Thyroid gland (tissue), 4 donors: ENCODE measurements at regions of chr12 and their contacts with region 1.

Region 1: DNA sequence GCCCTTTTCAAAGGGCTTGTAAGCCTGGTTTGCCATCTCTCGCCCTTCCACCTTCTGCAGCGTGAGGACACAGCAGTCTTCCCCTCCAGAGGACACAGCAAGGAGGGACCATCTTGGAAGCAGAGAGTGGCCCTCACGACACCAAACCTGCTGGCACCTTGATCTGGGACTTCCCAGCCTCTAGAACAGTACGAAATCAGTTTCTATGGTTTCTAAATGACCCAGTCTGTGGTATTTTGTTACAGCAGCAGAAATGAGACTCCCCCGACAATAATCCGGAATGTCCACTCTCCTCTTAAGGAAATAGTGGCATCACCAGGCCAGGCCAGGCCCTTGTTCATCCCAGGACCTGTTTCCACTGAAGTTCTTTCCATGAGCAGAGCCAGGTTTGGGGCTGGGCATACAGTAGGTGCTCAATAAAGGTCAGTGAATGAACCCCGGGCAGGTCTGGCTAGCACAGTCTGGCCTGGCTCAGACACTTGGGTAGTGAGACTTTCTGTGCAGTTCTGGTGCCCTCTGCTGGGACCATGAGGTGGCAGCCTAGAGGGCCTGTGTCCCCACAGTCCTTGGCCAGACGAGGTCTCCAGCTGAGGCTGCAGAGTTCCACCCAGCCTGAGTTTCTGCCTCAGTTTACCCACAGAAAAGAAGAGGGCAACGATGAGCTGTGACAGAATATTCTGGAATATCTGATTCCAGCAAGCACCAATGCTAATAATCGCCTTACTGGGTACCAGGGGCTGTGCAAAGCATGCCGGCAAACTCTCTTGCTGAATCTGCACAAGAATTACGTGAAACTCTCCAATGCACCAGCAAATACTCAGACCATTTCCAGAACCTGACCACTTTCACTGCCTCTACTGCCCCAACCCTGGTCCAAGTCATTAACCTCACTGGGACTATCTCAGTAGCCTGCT is 14.0 kb downstream of the ABCB9 start:
- DNase-seq: peak; percentile 77 to 80
- H3K4me3 ChIP-seq: no peak overlapping the region
- H3K27ac ChIP-seq: no peak overlapping the region
- H3K4me1 ChIP-seq: peaks cover 0 to 4% of the 10 kb centered on the region in 2 donors
- H3K27me3 ChIP-seq: no peaks in the 10 kb centered on the region
- CTCF ChIP-seq: peak; percentile 49 to 95 (median 91)
- POLR2A ChIP-seq: no peak

Region 2: DNA sequence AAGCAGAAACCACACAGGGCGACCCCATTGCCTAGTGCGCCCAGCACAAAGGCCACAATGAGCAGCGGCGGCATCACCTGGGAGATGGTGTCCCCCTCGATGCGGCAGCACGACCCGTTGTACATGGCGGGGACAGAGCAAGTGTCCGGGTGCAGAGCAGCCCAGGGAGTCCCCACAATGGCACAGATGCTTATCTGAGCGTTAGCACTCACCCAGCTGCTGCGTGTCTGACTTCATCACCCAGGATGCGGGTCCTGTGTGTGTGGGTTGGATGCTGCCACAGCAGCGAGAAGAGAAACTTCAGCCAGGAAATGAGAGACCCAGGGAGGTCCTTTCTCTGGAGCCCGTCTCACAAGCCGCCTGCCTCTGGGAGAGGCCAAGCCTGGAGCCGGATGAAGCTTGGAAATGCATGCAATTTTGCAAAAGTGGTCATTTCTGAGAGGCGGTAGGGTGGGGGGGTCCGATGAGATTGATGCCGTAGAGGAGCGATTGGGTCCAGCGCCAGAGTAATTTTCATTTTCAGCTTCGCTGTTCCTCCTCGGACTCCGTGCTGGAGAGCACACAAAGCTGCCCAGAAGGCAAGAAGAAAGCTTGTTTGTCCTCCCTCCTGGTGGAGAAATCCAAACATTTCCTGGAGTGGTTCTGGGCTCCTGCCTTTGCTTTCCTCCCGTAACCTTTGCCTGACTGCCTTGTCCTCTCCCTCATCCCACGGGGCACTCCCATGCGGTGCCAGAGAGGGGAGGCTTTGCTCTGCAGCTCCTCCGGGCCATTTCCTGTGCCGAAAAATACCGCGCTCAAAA is 221.8 kb before region 1 on chr12 and contains the start of gene HCAR1:
- intact Hi-C with region 1: no loop called
- DNase-seq: peak; percentile 61 to 68
- H3K4me3 ChIP-seq: peak within 1 kb of the TSS in 1 of 3 donors; percentile 12
- H3K27ac ChIP-seq: peak within 1 kb of the TSS; percentile 46 to 81 (median 64)
- H3K4me1 ChIP-seq: peaks cover 6 to 58% of the 10 kb centered on the region in 2 donors
- H3K27me3 ChIP-seq: no peaks in the 10 kb centered on the region
- CTCF ChIP-seq: peak in 4 of 6 experiments; percentile 23 to 47 (median 33)
- POLR2A ChIP-seq: peak in 1 of 2 donors; percentile 20
- total RNA-seq, gene HCAR1: 0.92 to 4.0 (median 2.0) TPM

Region 3: GRCh38 chr12:122788387-122788786 is 163.8 kb before region 1 on chr12:
- intact Hi-C with region 1: no loop called
- DNase-seq: no peak
- H3K4me3 ChIP-seq: no peak overlapping the region
- H3K27ac ChIP-seq: no peak overlapping the region
- H3K4me1 ChIP-seq: no peaks in the 10 kb centered on the region
- H3K27me3 ChIP-seq: no peaks in the 10 kb centered on the region
- CTCF ChIP-seq: no peak
- POLR2A ChIP-seq: no peak

Region 4: GRCh38 chr12:122799641-122800243 is 152.5 kb before region 1 on chr12:
- intact Hi-C with region 1: loop called (anchors 5 kb)
- DNase-seq: no peak
- H3K4me3 ChIP-seq: no peak overlapping the region
- H3K27ac ChIP-seq: no peak overlapping the region
- H3K4me1 ChIP-seq: peaks cover 0 to 6% of the 10 kb centered on the region in 2 donors
- H3K27me3 ChIP-seq: no peaks in the 10 kb centered on the region
- CTCF ChIP-seq: no peak
- POLR2A ChIP-seq: no peak

Region 5: DNA sequence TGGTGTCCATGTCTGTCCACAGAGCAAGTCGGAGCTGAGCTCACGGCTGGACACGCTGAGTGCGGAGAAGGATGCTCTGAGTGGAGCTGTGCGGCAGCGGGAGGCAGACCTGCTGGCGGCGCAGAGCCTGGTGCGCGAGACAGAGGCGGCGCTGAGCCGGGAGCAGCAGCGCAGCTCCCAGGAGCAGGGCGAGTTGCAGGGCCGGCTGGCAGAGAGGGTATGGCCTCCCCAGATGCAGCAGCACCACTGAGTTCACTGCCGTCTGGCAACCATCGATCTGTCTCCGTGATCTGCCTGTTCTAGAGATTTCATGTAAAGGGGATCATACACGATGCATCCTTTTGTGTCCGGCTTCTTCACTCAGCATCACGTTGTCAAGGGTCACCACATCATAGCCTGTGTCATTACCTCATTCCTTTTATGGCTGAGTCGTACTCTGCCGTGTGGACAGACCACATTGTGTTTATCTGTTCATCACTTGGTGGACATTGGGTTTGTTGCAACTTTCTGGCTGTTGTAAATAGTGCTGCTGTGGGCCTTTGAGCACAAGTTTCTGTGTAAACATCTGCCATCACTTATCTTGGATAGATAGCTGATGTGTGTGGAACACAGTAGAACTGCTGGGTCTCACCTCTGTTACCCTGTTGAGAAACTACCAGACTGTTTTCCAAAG is 95.1 kb before region 1 on chr12:
- intact Hi-C with region 1: loop called (anchors 2 kb)
- DNase-seq: no peak
- H3K4me3 ChIP-seq: no peak overlapping the region
- H3K27ac ChIP-seq: no peak overlapping the region
- H3K4me1 ChIP-seq: peaks cover 23 to 40% of the 10 kb centered on the region in 2 donors
- H3K27me3 ChIP-seq: no peaks in the 10 kb centered on the region
- CTCF ChIP-seq: no peak
- POLR2A ChIP-seq: no peak

Region 6: GRCh38 chr12:122995503-122996187 is 43.4 kb after region 1 on chr12:
- intact Hi-C with region 1: no loop called
- DNase-seq: peak in 1 of 2 donors; percentile 47
- H3K4me3 ChIP-seq: no peak overlapping the region
- H3K27ac ChIP-seq: peak overlapping the region in 1 of 3 donors; percentile 28
- H3K4me1 ChIP-seq: peaks cover 5% of the 10 kb centered on the region in 2 donors
- H3K27me3 ChIP-seq: no peaks in the 10 kb centered on the region
- CTCF ChIP-seq: no peak
- POLR2A ChIP-seq: no peak